Naive thymus-derived CD4-positive, alpha-beta T cell (primary cell): ENCODE measurements at regions of chr12 and their contacts with region 1.

Region 1: DNA sequence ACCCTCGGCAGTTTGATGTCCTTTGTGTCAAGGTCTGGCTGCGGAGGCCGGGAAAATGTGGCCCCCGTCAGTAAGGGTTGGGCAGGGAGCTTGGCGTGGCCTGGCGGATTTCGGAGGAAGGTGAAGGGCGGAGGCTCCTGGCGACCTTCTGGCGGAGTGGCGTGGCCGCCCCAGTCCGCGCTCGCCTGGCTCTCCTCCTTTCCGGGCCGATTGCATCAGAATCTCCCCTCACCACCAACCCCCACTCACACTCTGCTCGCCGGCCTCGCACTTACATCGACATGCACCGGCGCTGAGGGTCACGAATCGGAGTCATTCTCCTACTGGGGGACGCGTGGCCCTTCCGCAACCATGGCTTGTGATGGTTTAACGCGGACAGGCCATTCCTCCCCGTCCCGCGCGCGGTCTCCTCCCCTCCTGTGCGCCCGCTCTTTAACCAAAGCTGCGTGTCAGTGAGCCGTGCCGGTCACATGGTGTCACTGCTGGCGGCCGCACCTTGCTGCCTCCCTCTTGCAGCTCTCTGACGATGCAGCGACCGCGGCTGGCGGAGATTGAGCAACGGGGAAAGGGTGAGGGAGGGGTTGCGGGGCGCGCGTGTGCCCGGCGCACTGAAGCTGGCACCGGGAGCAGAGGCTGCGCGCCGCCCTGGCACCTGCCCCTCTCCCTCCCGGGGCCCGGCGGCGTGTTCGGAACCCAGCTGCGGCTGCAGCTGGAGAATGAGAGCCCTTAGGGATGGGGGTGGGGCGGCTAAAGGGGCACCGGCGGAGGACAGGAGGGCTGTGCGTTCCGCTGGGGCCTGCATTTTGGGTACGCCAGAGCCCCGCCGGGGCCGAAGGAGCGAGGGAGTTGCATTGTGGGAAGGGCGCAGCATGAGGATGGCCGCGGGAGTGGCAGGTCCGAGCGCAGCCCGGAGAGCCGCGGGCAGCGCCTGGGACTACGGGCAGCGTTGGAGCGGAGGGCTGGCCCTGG is at the start of gene SLC38A1:
- DNase-seq: peak; percentile 73 to 92 (median 88)
- ATAC-seq: peak; percentile 81
- H3K4me3 ChIP-seq: peak within 1 kb of the TSS; percentile 93
- H3K4me3 Mint-ChIP-seq: no peak within 1 kb of the TSS
- H3K27ac ChIP-seq: peak within 1 kb of the TSS; percentile 98
- H3K27ac Mint-ChIP-seq: no peak within 1 kb of the TSS
- H3K4me1 ChIP-seq: peaks cover 35 to 40% of the 10 kb centered on the region in 2 donors
- H3K4me1 Mint-ChIP-seq: peaks cover 9 to 35% (median 31%) of the 10 kb centered on the region in 7 donors
- H3K27me3 ChIP-seq: no peaks in the 10 kb centered on the region
- H3K27me3 Mint-ChIP-seq: no peaks in the 10 kb centered on the region
- total RNA-seq, gene SLC38A1: 172 to 283 (median 249) TPM

Region 2: DNA sequence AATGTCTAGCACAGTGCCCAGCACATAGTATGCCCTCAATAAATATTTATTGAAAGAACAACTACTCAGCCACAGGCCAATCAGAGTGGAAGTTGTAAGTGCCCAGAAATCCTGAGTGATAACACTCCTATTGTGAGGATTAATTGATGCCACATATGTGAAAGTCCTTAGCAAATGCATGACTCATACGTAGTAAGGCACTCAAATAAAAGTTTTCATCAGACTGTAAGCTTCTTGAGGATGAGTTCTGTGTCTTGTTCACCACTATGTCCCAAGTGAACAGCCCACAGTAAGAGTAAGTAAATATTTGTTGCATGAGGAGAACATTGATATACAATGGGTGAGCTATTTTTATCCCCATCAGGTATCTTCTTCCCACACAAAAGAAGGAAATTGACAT is 1077.6 kb before region 1 on chr12:
- CTCF ChIA-PET with region 1: no interaction called
- POLR2A ChIA-PET with region 1: no interaction called
- intact Hi-C with region 1: no loop called
- DNase-seq: no peak
- ATAC-seq: no peak
- H3K4me3 ChIP-seq: no peak overlapping the region
- H3K4me3 Mint-ChIP-seq: no peak overlapping the region
- H3K27ac ChIP-seq: no peak overlapping the region
- H3K27ac Mint-ChIP-seq: peak overlapping the region in 1 of 9 donors; percentile 22
- H3K4me1 ChIP-seq: no peaks in the 10 kb centered on the region
- H3K4me1 Mint-ChIP-seq: peaks cover 0 to 9% (median 6%) of the 10 kb centered on the region in 7 donors
- H3K27me3 ChIP-seq: no peaks in the 10 kb centered on the region
- H3K27me3 Mint-ChIP-seq: no peaks in the 10 kb centered on the region

Region 3: GRCh38 chr12:45215419-45216229 is 1053.2 kb before region 1 on chr12 and contains the start of gene ANO6:
- CTCF ChIA-PET with region 1: no interaction called
- POLR2A ChIA-PET with region 1: no interaction called
- intact Hi-C with region 1: loop called in 1 of 2 experiments (anchors 10 kb)
- DNase-seq: peak; percentile 58 to 85 (median 71)
- ATAC-seq: peak; percentile 86
- H3K4me3 ChIP-seq: peak within 1 kb of the TSS; percentile 83
- H3K4me3 Mint-ChIP-seq: peak within 1 kb of the TSS; percentile 90 to 99 (median 97)
- H3K27ac ChIP-seq: peak within 1 kb of the TSS; percentile 69
- H3K27ac Mint-ChIP-seq: peak within 1 kb of the TSS; percentile 83 to 96 (median 95)
- H3K4me1 ChIP-seq: peaks cover 17% of the 10 kb centered on the region in 2 donors
- H3K4me1 Mint-ChIP-seq: peaks cover 26 to 70% (median 59%) of the 10 kb centered on the region in 7 donors
- H3K27me3 ChIP-seq: no peaks in the 10 kb centered on the region
- H3K27me3 Mint-ChIP-seq: no peaks in the 10 kb centered on the region
- total RNA-seq, gene ANO6: 15.1 to 29.7 (median 25.3) TPM

Region 4: DNA sequence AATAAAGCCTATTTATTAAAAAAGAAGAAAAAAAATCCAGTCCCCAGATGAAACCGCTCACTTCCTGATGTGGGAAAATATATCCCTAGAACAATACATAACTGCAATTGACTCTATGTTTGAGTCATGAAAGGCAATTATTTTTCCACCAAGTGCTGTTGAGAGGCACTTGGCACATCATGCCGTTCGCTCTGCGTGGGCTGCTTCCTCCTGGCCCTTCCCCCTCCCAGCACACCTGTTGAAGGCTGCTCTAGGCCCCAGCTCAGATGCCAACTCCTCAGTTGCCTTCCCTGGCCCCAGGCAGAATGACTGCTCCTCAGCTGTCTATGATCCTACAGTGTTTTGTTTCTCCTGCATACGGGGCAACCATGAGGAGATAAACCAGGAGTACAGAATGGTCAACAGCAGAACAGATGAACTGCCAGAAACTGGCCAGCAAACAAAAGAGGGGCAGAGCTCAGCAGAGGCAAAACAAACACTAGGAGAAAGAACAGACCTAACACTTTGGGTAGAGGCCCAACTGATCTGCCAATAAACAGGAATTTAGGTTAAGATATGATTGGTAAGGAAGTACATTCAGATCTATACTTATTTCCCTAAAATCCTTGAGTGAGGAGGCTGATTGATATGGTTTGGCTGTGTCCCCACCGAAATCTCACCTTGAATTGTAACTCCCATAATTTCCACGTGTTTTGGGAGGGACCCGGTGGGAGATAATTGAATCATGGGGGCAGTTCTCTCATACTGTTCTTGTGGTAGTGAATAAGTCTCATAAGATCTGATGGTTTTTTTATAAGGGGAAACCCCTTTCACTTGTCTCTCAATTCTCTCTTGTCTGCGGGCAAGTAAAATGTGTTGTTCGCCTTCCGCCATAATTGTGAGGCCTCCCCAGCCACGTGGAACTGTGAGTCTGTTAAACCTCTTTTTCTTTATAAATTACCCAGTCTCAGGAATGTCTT is 58.7 kb before region 1 on chr12:
- CTCF ChIA-PET with region 1: interaction called, 13 read pairs
- POLR2A ChIA-PET with region 1: interaction called, 303 read pairs
- intact Hi-C with region 1: loop called (anchors 1 kb)
- DNase-seq: peak in 8 of 9 donors; percentile 47 to 81 (median 68)
- ATAC-seq: peak; percentile 66
- H3K4me3 ChIP-seq: no peak overlapping the region
- H3K4me3 Mint-ChIP-seq: peak overlapping the region; percentile 47 to 76 (median 69)
- H3K27ac ChIP-seq: peak overlapping the region; percentile 78
- H3K27ac Mint-ChIP-seq: peak overlapping the region; percentile 89 to 100 (median 98)
- H3K4me1 ChIP-seq: peaks cover 65 to 72% of the 10 kb centered on the region in 2 donors
- H3K4me1 Mint-ChIP-seq: peaks cover 45 to 98% (median 96%) of the 10 kb centered on the region in 7 donors
- H3K27me3 ChIP-seq: no peaks in the 10 kb centered on the region
- H3K27me3 Mint-ChIP-seq: no peaks in the 10 kb centered on the region

Region 5: GRCh38 chr12:46253544-46254162 is 15.2 kb before region 1 on chr12:
- CTCF ChIA-PET with region 1: interaction called, 3 read pairs
- POLR2A ChIA-PET with region 1: interaction called, 18 read pairs
- intact Hi-C with region 1: loop called (anchors 1 to 2 kb)
- DNase-seq: no peak
- ATAC-seq: no peak
- H3K4me3 ChIP-seq: no peak overlapping the region
- H3K4me3 Mint-ChIP-seq: peak overlapping the region in 4 of 10 donors; percentile 14 to 34 (median 21)
- H3K27ac ChIP-seq: no peak overlapping the region
- H3K27ac Mint-ChIP-seq: peak overlapping the region in 8 of 9 donors; percentile 32 to 86 (median 50)
- H3K4me1 ChIP-seq: peaks cover 33 to 36% of the 10 kb centered on the region in 2 donors
- H3K4me1 Mint-ChIP-seq: peaks cover 35 to 91% (median 66%) of the 10 kb centered on the region in 7 donors
- H3K27me3 ChIP-seq: no peaks in the 10 kb centered on the region
- H3K27me3 Mint-ChIP-seq: no peaks in the 10 kb centered on the region

Region 6: DNA sequence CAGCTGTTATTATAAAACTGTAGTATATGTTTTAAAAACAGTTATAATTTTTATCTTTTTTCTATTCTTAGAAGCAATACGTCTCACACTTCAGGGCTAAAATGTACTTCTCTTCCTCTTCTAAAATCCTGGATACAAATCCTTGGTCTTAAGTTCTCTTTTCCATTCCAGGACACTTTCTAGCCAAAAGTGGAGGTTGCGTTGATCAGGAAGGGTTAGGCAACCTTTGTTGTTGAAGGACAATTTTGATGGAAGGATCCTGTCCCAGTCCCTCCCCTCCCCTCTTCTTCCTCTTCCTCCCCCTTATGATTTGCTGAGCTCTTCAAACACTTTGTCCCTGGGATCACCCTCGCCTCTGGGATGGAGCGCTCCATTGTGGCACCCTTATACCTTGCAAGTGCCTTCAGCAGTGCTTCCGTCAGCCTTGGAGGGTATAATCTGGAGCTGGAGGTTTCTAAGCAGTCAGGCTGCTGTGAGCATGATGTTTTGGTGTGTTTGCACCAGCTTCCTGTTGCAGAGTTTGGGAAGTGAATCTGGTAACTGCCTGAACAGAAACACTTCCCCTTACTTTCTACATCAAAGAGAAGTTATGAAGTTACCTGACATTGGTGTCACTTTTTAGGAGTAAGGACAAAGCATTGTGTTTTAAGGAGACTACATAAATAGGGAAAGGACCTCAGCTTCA is 191.1 kb after region 1 on chr12:
- CTCF ChIA-PET with region 1: interaction called, 3 read pairs
- POLR2A ChIA-PET with region 1: interaction called, 3 read pairs
- intact Hi-C with region 1: loop called in 1 of 2 experiments (anchors 5 kb)
- DNase-seq: peak in 4 of 9 donors; percentile 10 to 38 (median 26)
- ATAC-seq: peak; percentile 63
- H3K4me3 ChIP-seq: peak overlapping the region; percentile 47
- H3K4me3 Mint-ChIP-seq: peak overlapping the region; percentile 74 to 95 (median 88)
- H3K27ac ChIP-seq: peak overlapping the region; percentile 42
- H3K27ac Mint-ChIP-seq: peak overlapping the region; percentile 86 to 99 (median 96)
- H3K4me1 ChIP-seq: peaks cover 26 to 56% of the 10 kb centered on the region in 2 donors
- H3K4me1 Mint-ChIP-seq: peaks cover 45 to 67% (median 61%) of the 10 kb centered on the region in 7 donors
- H3K27me3 ChIP-seq: no peaks in the 10 kb centered on the region
- H3K27me3 Mint-ChIP-seq: no peaks in the 10 kb centered on the region

Region 7: GRCh38 chr12:46773586-46774321 is 504.9 kb after region 1 on chr12:
- CTCF ChIA-PET with region 1: no interaction called
- POLR2A ChIA-PET with region 1: no interaction called
- intact Hi-C with region 1: no loop called
- DNase-seq: no peak
- ATAC-seq: no peak
- H3K4me3 ChIP-seq: no peak overlapping the region
- H3K4me3 Mint-ChIP-seq: no peak overlapping the region
- H3K27ac ChIP-seq: no peak overlapping the region
- H3K27ac Mint-ChIP-seq: no peak overlapping the region
- H3K4me1 ChIP-seq: no peaks in the 10 kb centered on the region
- H3K4me1 Mint-ChIP-seq: no peaks in the 10 kb centered on the region
- H3K27me3 ChIP-seq: no peaks in the 10 kb centered on the region
- H3K27me3 Mint-ChIP-seq: peaks cover 0 to 10% (median 2%) of the 10 kb centered on the region in 5 donors

Region 8: DNA sequence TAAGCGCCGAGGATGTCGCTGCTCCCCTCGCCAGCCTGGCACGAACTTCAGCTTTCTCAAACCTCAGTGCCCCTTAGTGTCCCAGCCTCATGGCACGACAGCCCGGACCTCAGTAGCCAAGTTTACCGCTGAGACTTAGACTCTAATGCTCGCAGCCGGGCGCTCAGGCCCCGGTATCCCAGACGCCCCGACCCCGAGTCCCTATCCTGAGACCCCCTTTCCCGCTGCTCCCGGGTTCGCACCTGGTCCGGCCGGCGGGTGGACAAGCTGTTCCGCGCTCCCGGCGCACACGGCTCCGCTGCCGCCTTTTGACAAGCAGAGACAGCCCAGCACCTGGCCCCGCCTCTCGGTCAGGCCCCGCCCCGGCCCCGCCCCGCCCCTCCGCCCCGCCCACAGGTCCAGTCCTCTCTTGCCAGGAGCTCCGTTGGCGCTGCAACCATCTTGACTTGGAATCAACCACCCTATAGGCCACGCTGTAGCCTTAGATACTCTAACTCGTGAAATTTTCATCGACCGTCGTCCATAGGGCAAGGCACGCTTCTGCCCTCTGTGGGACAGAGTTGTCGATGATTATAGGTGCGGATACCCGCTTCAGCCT is 1635.9 kb after region 1 on chr12 and contains the start of gene VDR:
- CTCF ChIA-PET with region 1: no interaction called
- POLR2A ChIA-PET with region 1: no interaction called
- intact Hi-C with region 1: loop called in 1 of 2 experiments (anchors 10 kb)
- DNase-seq: peak; percentile 42 to 76 (median 64)
- ATAC-seq: peak; percentile 86
- H3K4me3 ChIP-seq: peak within 1 kb of the TSS; percentile 73
- H3K4me3 Mint-ChIP-seq: peak within 1 kb of the TSS; percentile 86 to 98 (median 94)
- H3K27ac ChIP-seq: peak within 1 kb of the TSS; percentile 44
- H3K27ac Mint-ChIP-seq: peak within 1 kb of the TSS; percentile 51 to 88 (median 74)
- H3K4me1 ChIP-seq: peaks cover 25 to 41% of the 10 kb centered on the region in 2 donors
- H3K4me1 Mint-ChIP-seq: peaks cover 35 to 57% (median 47%) of the 10 kb centered on the region in 7 donors
- H3K27me3 ChIP-seq: no peaks in the 10 kb centered on the region
- H3K27me3 Mint-ChIP-seq: peaks cover 0 to 34% (median 0%) of the 10 kb centered on the region in 5 donors
- total RNA-seq, gene VDR: 1.6 to 82.6 (median 2.9) TPM